Spleen (tissue), 13 donors: ENCODE measurements at regions of chr1 and their contacts with region 1.

Region 1: GRCh38 chr1:203702130-203702577 is 62.8 kb upstream of the LAX1 start:
- DNase-seq: no peak
- H3K4me3 ChIP-seq: no peak overlapping the region
- H3K27ac ChIP-seq: no peak overlapping the region
- H3K4me1 ChIP-seq: peaks cover 0 to 17% (median 0%) of the 10 kb centered on the region in 6 donors
- H3K27me3 ChIP-seq: no peaks in the 10 kb centered on the region
- CTCF ChIP-seq: peak; percentile 80 to 97 (median 86)
- POLR2A ChIP-seq: no peak

Region 2: DNA sequence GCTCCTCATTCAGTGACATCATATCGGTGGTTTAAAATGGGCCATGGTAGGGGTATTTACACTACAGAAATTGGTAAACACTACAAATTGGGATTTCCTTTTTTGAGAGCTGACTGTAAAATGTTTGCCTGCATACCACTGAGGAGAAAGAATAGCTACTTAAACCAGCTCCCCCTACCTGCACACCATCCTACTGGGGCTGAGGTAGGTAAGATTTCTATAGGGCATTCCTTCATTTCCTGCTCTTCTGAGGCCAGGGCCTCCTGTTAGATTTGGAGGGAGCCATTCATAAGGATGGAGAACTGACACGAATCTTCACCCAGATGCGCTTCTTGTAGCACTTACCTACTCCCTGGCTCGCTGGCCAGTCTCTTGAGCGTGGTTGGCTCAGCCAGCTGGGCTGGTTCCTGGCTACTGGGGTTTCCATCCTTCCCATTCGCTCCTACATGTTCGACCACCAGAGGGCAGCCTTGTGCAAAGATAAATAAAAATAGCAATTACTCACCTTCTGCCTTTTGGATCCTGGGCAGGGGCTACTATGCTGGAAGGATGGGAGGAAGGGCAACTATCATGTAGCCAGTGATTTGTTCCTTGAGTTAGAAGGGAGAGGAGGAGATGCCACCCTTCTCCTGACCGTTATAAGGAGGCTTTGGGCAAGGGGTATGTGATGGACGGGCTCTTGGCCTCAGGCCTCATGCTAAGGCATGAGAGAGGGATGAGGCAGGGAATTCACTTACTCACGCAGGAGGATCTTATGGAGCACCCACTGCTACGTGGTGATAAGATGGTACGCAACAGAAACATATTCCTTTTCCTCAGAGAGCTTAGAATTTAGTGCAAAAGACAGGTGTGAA is 197.5 kb before region 1 on chr1:
- intact Hi-C with region 1: loop called (anchors 2 kb)
- DNase-seq: peak; percentile 85
- H3K4me3 ChIP-seq: no peak overlapping the region
- H3K27ac ChIP-seq: no peak overlapping the region
- H3K4me1 ChIP-seq: peaks cover 3 to 29% (median 16%) of the 10 kb centered on the region in 6 donors
- H3K27me3 ChIP-seq: peaks cover 0 to 22% (median 0%) of the 10 kb centered on the region in 7 donors
- CTCF ChIP-seq: peak; percentile 76 to 95 (median 90)
- POLR2A ChIP-seq: no peak

Region 3: DNA sequence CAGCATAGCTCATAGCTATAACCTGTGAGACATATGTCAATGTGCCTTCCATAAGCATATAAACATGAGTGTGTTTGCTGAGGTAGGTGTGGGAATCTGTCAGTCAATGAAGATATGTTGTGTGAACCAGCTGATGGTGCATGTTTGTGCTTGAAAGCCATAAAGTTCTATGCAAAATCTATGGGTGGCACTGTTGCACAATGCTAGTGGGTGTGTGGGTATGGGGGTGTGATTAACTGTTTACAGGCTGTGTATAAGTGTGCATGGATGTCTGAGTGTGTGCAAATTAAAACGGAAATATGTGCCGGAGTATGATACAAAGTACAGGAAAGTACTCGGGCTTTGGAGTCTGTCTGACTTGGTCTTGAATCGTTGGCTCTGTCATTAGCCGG is 76.5 kb before region 1 on chr1:
- intact Hi-C with region 1: loop called (anchors 10 kb)
- DNase-seq: no peak
- H3K4me3 ChIP-seq: peak overlapping the region in 4 of 8 donors; percentile 50 to 87 (median 59)
- H3K27ac ChIP-seq: peak overlapping the region in 6 of 8 donors; percentile 32 to 91 (median 82)
- H3K4me1 ChIP-seq: peaks cover 23 to 63% (median 54%) of the 10 kb centered on the region in 6 donors
- H3K27me3 ChIP-seq: peaks cover 0 to 27% (median 0%) of the 10 kb centered on the region in 7 donors
- CTCF ChIP-seq: peak in 9 of 11 experiments; percentile 23 to 72 (median 53)
- POLR2A ChIP-seq: no peak